Panc1 (cell line): ENCODE measurements at regions of chr2 and their contacts with region 1.

Region 1: GRCh38 chr2:216404010-216404618 is 8.2 kb upstream of the SMARCAL1 start:
- DNase-seq: peak; percentile 36
- ATAC-seq: peak; percentile 80
- H3K4me3 ChIP-seq: no peak overlapping the region
- H3K27ac ChIP-seq: no peak overlapping the region
- H3K4me1 ChIP-seq: no peaks in the 10 kb centered on the region
- H3K27me3 ChIP-seq: no peaks in the 10 kb centered on the region
- CTCF ChIP-seq: peak; percentile 92

Region 2: DNA sequence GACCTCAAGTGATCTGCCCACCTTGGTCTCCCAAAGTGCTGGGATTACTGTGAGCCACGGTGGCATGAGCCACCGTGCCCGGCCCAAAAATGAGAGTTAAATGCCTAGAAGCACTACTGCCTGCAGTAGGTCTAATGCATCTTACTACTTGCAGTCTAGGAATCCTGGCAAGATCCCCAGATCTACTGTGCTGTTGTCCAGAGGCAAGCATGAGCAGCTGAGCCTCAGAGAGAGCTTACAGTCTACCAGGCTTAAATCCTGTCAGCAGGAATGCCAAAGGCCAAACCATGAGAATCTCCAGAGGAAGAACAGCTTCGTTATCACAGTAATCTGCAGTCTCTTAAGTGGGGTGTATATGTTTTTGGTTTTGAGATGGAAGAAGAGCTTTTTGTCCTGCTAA is 240.6 kb before region 1 on chr2:
- CTCF ChIA-PET with region 1: no interaction called
- POLR2A ChIA-PET with region 1: no interaction called
- in situ Hi-C with region 1: no loop called
- intact Hi-C with region 1: no loop called
- DNase-seq: no peak
- ATAC-seq: no peak
- H3K4me3 ChIP-seq: no peak overlapping the region
- H3K27ac ChIP-seq: no peak overlapping the region
- H3K4me1 ChIP-seq: no peaks in the 10 kb centered on the region
- H3K27me3 ChIP-seq: no peaks in the 10 kb centered on the region
- CTCF ChIP-seq: no peak

Region 3: GRCh38 chr2:216222650-216223352 is 181.3 kb before region 1 on chr2:
- CTCF ChIA-PET with region 1: interaction called, 4 read pairs
- POLR2A ChIA-PET with region 1: no interaction called
- in situ Hi-C with region 1: no loop called
- intact Hi-C with region 1: loop called (anchors 5 kb)
- DNase-seq: peak; percentile 33
- ATAC-seq: peak; percentile 62
- H3K4me3 ChIP-seq: no peak overlapping the region
- H3K27ac ChIP-seq: no peak overlapping the region
- H3K4me1 ChIP-seq: 0 out of 2 replicates have a peak, but pooled peaks cover 3% of the 10 kb centered on the region
- H3K27me3 ChIP-seq: no peaks in the 10 kb centered on the region
- CTCF ChIP-seq: peak; percentile 63

Region 4: GRCh38 chr2:216372761-216373291 is 31.3 kb before region 1 on chr2:
- CTCF ChIA-PET with region 1: no interaction called
- POLR2A ChIA-PET with region 1: no interaction called
- in situ Hi-C with region 1: no loop called
- intact Hi-C with region 1: no loop called
- DNase-seq: peak; percentile 67
- ATAC-seq: peak; percentile 36; the same call in 1 of the 2 replicates
- H3K4me3 ChIP-seq: peak overlapping the region; percentile 28 to 38; a peak in 2 of 4 replicates
- H3K27ac ChIP-seq: no peak overlapping the region
- H3K4me1 ChIP-seq: peaks cover 14% of the 10 kb centered on the region; the same call in 1 of the 2 replicates
- H3K27me3 ChIP-seq: peaks cover 23% of the 10 kb centered on the region
- CTCF ChIP-seq: no peak

Region 5: GRCh38 chr2:217451666-217452065 is 1047.6 kb after region 1 on chr2:
- CTCF ChIA-PET with region 1: no interaction called
- POLR2A ChIA-PET with region 1: no interaction called
- in situ Hi-C with region 1: no loop called
- intact Hi-C with region 1: no loop called
- DNase-seq: no peak
- ATAC-seq: no peak
- H3K4me3 ChIP-seq: no peak overlapping the region
- H3K27ac ChIP-seq: no peak overlapping the region
- H3K4me1 ChIP-seq: no peaks in the 10 kb centered on the region
- H3K27me3 ChIP-seq: no peaks in the 10 kb centered on the region
- CTCF ChIP-seq: no peak